CD8-positive, alpha-beta T cell (primary cell): ENCODE measurements at regions of chr3 and their contacts with region 1.

Region 1: DNA sequence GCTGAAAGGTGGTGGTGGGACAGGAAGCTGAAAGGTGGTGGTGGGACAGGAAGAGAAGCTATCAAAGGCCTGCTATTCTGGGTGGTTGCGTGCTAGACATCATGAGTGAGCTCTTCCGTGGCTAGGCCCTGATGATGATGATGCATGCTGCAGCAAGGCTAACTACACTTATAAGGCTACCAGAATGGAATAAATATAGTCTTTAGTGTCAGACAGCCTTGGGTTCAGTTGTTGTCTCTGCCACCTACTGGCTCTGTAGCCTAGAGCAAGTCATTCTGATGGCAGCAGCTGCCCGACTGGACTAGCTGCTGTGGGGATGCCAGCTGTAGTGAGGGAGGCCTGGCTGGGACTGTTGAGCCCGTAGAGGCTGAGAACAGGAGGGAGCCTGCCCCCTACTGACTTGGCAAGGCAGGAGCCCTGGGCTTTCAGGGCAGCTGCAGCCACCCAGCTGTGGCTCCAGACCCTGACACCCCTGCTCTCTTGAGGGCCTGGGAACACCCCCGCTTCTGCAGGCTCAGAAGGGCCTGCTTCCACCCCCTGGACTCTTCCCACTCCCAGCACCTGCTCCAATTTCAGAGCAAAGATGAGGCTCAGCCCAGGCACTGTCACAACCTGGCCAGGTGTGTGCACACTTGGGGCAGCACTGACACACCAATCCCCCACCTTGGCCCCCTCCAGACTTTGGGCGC is 21.4 kb upstream of the ZBED2 start:
- DNase-seq: peak; percentile 24 to 91 (median 63)
- ATAC-seq: peak; percentile 93
- H3K4me3 ChIP-seq: no peak overlapping the region
- H3K4me3 Mint-ChIP-seq: peak overlapping the region; percentile 24
- H3K27ac ChIP-seq: peak overlapping the region; percentile 42 to 79
- H3K27ac Mint-ChIP-seq: peak overlapping the region; percentile 95
- H3K4me1 ChIP-seq: peaks cover 38% of the 10 kb centered on the region
- H3K4me1 Mint-ChIP-seq: peaks cover 55% of the 10 kb centered on the region
- H3K27me3 ChIP-seq: no peaks in the 10 kb centered on the region
- H3K27me3 Mint-ChIP-seq: no peaks in the 10 kb centered on the region
- CTCF ChIP-seq: peak; percentile 60

Region 2: GRCh38 chr3:111252779-111253178 is 363.8 kb before region 1 on chr3:
- CTCF ChIA-PET with region 1: no interaction called
- POLR2A ChIA-PET with region 1: no interaction called
- intact Hi-C with region 1: loop called in 1 of 2 experiments (anchors 10 kb)
- DNase-seq: peak in 2 of 9 experiments; percentile 12 to 24
- ATAC-seq: no peak
- H3K4me3 ChIP-seq: no peak overlapping the region
- H3K4me3 Mint-ChIP-seq: no peak overlapping the region
- H3K27ac ChIP-seq: no peak overlapping the region
- H3K27ac Mint-ChIP-seq: no peak overlapping the region
- H3K4me1 ChIP-seq: peaks cover 15% of the 10 kb centered on the region
- H3K4me1 Mint-ChIP-seq: peaks cover 29% of the 10 kb centered on the region
- H3K27me3 ChIP-seq: no peaks in the 10 kb centered on the region
- H3K27me3 Mint-ChIP-seq: no peaks in the 10 kb centered on the region
- CTCF ChIP-seq: no peak

Region 3: GRCh38 chr3:111351334-111351733 is 265.2 kb before region 1 on chr3:
- CTCF ChIA-PET with region 1: no interaction called
- POLR2A ChIA-PET with region 1: no interaction called
- intact Hi-C with region 1: no loop called
- DNase-seq: no peak
- ATAC-seq: no peak
- H3K4me3 ChIP-seq: no peak overlapping the region
- H3K4me3 Mint-ChIP-seq: no peak overlapping the region
- H3K27ac ChIP-seq: no peak overlapping the region
- H3K27ac Mint-ChIP-seq: no peak overlapping the region
- H3K4me1 ChIP-seq: no peaks in the 10 kb centered on the region
- H3K4me1 Mint-ChIP-seq: no peaks in the 10 kb centered on the region
- H3K27me3 ChIP-seq: no peaks in the 10 kb centered on the region
- H3K27me3 Mint-ChIP-seq: no peaks in the 10 kb centered on the region
- CTCF ChIP-seq: no peak

Region 4: DNA sequence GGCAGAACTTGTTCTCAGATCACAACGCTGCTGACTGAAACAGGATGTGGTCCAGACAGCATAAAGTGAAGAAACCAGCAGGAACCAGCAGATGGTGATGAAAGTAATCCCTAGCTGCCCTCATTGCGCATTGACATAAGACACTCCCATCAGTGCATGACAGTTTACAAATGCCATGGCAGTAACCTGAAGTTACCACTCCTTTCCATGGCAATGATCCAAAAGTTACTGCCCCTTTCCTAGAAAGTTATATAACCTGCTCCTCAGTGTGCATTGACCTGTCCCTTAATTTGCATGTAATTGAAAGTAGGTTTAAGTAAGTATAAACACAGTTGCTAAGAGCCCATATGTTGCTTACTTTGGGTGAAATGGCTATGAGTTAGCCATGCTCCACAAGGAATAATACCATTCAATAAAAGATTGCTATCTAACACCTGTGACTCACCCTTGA is 223.6 kb before region 1 on chr3:
- CTCF ChIA-PET with region 1: no interaction called
- POLR2A ChIA-PET with region 1: no interaction called
- intact Hi-C with region 1: loop called in 1 of 2 experiments (anchors 5 kb)
- DNase-seq: peak; percentile 3 to 88 (median 33)
- ATAC-seq: peak; percentile 95
- H3K4me3 ChIP-seq: no peak overlapping the region
- H3K4me3 Mint-ChIP-seq: no peak overlapping the region
- H3K27ac ChIP-seq: no peak overlapping the region
- H3K27ac Mint-ChIP-seq: peak overlapping the region; percentile 86
- H3K4me1 ChIP-seq: peaks cover 6% of the 10 kb centered on the region
- H3K4me1 Mint-ChIP-seq: peaks cover 19% of the 10 kb centered on the region
- H3K27me3 ChIP-seq: no peaks in the 10 kb centered on the region
- H3K27me3 Mint-ChIP-seq: no peaks in the 10 kb centered on the region
- CTCF ChIP-seq: no peak

Region 5: DNA sequence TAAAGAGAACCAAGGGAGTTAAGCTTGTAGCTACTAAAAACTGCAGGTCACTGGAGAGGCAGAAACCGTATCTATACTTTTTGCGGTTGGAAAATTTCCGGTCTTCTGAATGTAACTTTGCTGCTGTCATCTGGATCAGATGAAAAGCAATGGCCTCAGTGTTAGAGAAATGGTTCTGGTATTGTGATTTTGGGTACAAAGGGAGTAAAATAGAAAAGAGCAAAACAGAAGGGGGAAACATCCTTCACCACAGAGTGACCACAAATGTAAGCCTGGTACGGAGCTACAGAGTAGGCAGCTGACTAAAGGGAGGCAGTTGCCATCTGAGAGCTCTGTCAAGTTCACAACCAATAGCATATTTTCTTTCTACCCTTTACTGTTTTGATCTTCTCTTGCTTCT is 68.9 kb before region 1 on chr3:
- CTCF ChIA-PET with region 1: interaction called, 4 read pairs
- POLR2A ChIA-PET with region 1: interaction called, 8 read pairs
- intact Hi-C with region 1: loop called (anchors 1 to 2 kb)
- DNase-seq: peak in 7 of 9 experiments; percentile 26 to 86 (median 66)
- ATAC-seq: peak; percentile 76
- H3K4me3 ChIP-seq: peak overlapping the region; percentile 33 to 67
- H3K4me3 Mint-ChIP-seq: no peak overlapping the region
- H3K27ac ChIP-seq: peak overlapping the region; percentile 57 to 89
- H3K27ac Mint-ChIP-seq: no peak overlapping the region
- H3K4me1 ChIP-seq: peaks cover 82% of the 10 kb centered on the region
- H3K4me1 Mint-ChIP-seq: peaks cover 36% of the 10 kb centered on the region
- H3K27me3 ChIP-seq: no peaks in the 10 kb centered on the region
- H3K27me3 Mint-ChIP-seq: no peaks in the 10 kb centered on the region
- CTCF ChIP-seq: no peak

Region 6: GRCh38 chr3:111577794-111578685 is 38.5 kb before region 1 on chr3:
- CTCF ChIA-PET with region 1: interaction called, 4 read pairs
- POLR2A ChIA-PET with region 1: no interaction called
- intact Hi-C with region 1: loop called (anchors 2 kb)
- DNase-seq: peak in 2 of 9 experiments; percentile 51 to 68
- ATAC-seq: peak; percentile 90
- H3K4me3 ChIP-seq: no peak overlapping the region
- H3K4me3 Mint-ChIP-seq: no peak overlapping the region
- H3K27ac ChIP-seq: no peak overlapping the region
- H3K27ac Mint-ChIP-seq: peak overlapping the region; percentile 53
- H3K4me1 ChIP-seq: peaks cover 7% of the 10 kb centered on the region
- H3K4me1 Mint-ChIP-seq: peaks cover 75% of the 10 kb centered on the region
- H3K27me3 ChIP-seq: no peaks in the 10 kb centered on the region
- H3K27me3 Mint-ChIP-seq: no peaks in the 10 kb centered on the region
- CTCF ChIP-seq: no peak

Region 7: GRCh38 chr3:111601810-111602209 is 14.8 kb before region 1 on chr3:
- CTCF ChIA-PET with region 1: interaction called, 7 read pairs
- POLR2A ChIA-PET with region 1: no interaction called
- intact Hi-C with region 1: loop called in 1 of 2 experiments (anchors 2 kb)
- DNase-seq: no peak
- ATAC-seq: no peak
- H3K4me3 ChIP-seq: no peak overlapping the region
- H3K4me3 Mint-ChIP-seq: no peak overlapping the region
- H3K27ac ChIP-seq: no peak overlapping the region
- H3K27ac Mint-ChIP-seq: peak overlapping the region; percentile 16
- H3K4me1 ChIP-seq: no peaks in the 10 kb centered on the region
- H3K4me1 Mint-ChIP-seq: peaks cover 31% of the 10 kb centered on the region
- H3K27me3 ChIP-seq: no peaks in the 10 kb centered on the region
- H3K27me3 Mint-ChIP-seq: no peaks in the 10 kb centered on the region
- CTCF ChIP-seq: no peak

Region 8: GRCh38 chr3:111691293-111691909 is 74.8 kb after region 1 on chr3:
- CTCF ChIA-PET with region 1: interaction called, 4 read pairs
- POLR2A ChIA-PET with region 1: no interaction called
- intact Hi-C with region 1: loop called in 1 of 2 experiments (anchors 5 kb)
- DNase-seq: peak in 2 of 9 experiments; percentile 54 to 71
- ATAC-seq: peak; percentile 68
- H3K4me3 ChIP-seq: no peak overlapping the region
- H3K4me3 Mint-ChIP-seq: no peak overlapping the region
- H3K27ac ChIP-seq: no peak overlapping the region
- H3K27ac Mint-ChIP-seq: no peak overlapping the region
- H3K4me1 ChIP-seq: peaks cover 5% of the 10 kb centered on the region
- H3K4me1 Mint-ChIP-seq: peaks cover 68% of the 10 kb centered on the region
- H3K27me3 ChIP-seq: no peaks in the 10 kb centered on the region
- H3K27me3 Mint-ChIP-seq: no peaks in the 10 kb centered on the region
- CTCF ChIP-seq: peak; percentile 65

Region 9: GRCh38 chr3:112013058-112013783 is 396.7 kb after region 1 on chr3:
- CTCF ChIA-PET with region 1: no interaction called
- POLR2A ChIA-PET with region 1: no interaction called
- intact Hi-C with region 1: no loop called
- DNase-seq: peak; percentile 9 to 72 (median 51)
- ATAC-seq: peak; percentile 79
- H3K4me3 ChIP-seq: no peak overlapping the region
- H3K4me3 Mint-ChIP-seq: no peak overlapping the region
- H3K27ac ChIP-seq: no peak overlapping the region
- H3K27ac Mint-ChIP-seq: no peak overlapping the region
- H3K4me1 ChIP-seq: peaks cover 2% of the 10 kb centered on the region
- H3K4me1 Mint-ChIP-seq: peaks cover 6% of the 10 kb centered on the region
- H3K27me3 ChIP-seq: no peaks in the 10 kb centered on the region
- H3K27me3 Mint-ChIP-seq: no peaks in the 10 kb centered on the region
- CTCF ChIP-seq: peak; percentile 69